Caco-2 (cell line): ENCODE measurements at regions of chr12 and their contacts with region 1.

Region 1: GRCh38 chr12:57124259-57124877 is 3.9 kb upstream of the LRP1 start:
- DNase-seq: peak; percentile 75 to 82
- H3K4me3 ChIP-seq: no peak overlapping the region
- H3K4me3 Mint-ChIP-seq: no peak overlapping the region
- H3K27ac Mint-ChIP-seq: no peak overlapping the region
- H3K4me1 ChIP-seq: peaks cover 8% of the 10 kb centered on the region
- H3K4me1 Mint-ChIP-seq: peaks cover 8% of the 10 kb centered on the region
- H3K27me3 ChIP-seq: no peaks in the 10 kb centered on the region
- H3K27me3 Mint-ChIP-seq: no peaks in the 10 kb centered on the region
- CTCF ChIP-seq: peak; percentile 86 to 88

Region 2: DNA sequence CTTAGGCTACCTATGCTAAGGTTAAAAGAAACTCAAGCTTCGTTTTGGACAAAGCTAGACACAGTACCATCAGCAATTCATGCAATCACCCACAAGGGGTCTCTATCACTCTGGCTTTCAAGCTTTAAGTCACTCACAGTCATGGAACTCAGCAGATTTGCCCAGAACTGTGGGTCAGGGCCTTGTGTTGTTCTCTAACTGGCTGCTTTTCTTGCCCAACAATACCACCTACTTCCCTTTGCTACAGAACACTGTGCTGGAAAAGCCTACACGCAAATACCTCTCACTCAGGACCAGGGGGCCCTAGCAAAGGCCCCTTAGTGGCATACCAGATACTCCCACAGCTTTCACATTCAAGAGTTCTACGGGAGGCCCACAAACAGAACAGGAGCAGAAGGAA is 54.8 kb before region 1 on chr12:
- CTCF ChIA-PET with region 1: interaction called, 13 read pairs
- POLR2A ChIA-PET with region 1: no interaction called
- intact Hi-C with region 1: no loop called
- DNase-seq: peak; percentile 66
- H3K4me3 ChIP-seq: no peak overlapping the region
- H3K4me3 Mint-ChIP-seq: no peak overlapping the region
- H3K27ac Mint-ChIP-seq: peak overlapping the region; percentile 5
- H3K4me1 ChIP-seq: no peaks in the 10 kb centered on the region
- H3K4me1 Mint-ChIP-seq: no peaks in the 10 kb centered on the region
- H3K27me3 ChIP-seq: no peaks in the 10 kb centered on the region
- H3K27me3 Mint-ChIP-seq: no peaks in the 10 kb centered on the region
- CTCF ChIP-seq: peak; percentile 81 to 86

Region 3: GRCh38 chr12:57088459-57089248 is 35.7 kb before region 1 on chr12 and contains the start of gene NAB2:
- CTCF ChIA-PET with region 1: interaction called, 13 read pairs
- POLR2A ChIA-PET with region 1: interaction called, 7 read pairs
- intact Hi-C with region 1: no loop called
- DNase-seq: peak; percentile 94 to 95
- H3K4me3 ChIP-seq: peak within 1 kb of the TSS; percentile 97
- H3K4me3 Mint-ChIP-seq: peak within 1 kb of the TSS; percentile 78
- H3K27ac Mint-ChIP-seq: peak within 1 kb of the TSS; percentile 98
- H3K4me1 ChIP-seq: peaks cover 24% of the 10 kb centered on the region
- H3K4me1 Mint-ChIP-seq: peaks cover 35% of the 10 kb centered on the region
- H3K27me3 ChIP-seq: no peaks in the 10 kb centered on the region
- H3K27me3 Mint-ChIP-seq: no peaks in the 10 kb centered on the region
- CTCF ChIP-seq: no peak
- total RNA-seq, gene NAB2: 15.7 and 16.4 TPM in 2 replicates

Region 4: DNA sequence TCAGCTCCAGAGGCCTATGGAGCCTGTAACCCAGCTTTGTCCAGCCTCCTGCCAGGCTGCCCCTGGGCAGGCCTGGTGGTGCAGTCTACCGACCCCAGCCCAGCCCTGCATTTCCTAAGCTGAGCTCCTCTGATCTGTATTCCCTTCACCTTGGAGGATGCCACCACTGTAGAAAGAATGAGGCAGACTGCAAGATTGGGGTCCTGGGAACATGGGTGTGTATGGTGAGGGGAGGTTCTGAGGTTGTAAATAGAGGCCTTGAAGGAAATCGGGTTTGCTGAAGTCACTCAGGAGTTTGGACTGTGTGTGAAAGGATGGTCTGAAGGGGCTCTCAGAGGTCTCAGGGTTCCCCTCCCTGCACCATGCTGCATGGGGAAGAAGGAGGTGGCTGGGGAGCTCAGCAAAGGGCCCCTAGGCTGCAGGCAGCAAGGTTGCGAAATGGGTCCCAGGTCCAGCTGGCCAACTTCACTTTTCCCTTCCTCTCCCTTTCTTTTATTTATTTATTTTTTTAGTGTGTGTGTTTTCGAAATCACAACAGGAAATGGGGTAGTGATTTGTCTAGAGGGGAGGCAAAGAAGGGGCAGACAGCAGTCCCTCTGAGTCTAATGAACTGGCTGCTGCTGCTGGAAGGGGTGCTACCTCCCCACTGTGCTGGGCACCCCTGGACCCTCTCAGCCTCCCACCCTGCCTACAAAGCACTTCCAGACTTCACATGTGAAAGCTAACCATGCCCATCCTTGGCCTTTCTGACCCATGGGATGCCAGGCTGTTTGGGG is 24.3 kb after region 1 on chr12:
- CTCF ChIA-PET with region 1: interaction called, 35 read pairs
- POLR2A ChIA-PET with region 1: interaction called, 39 read pairs
- intact Hi-C with region 1: loop called (anchors 1 kb)
- DNase-seq: peak; percentile 56 to 60
- H3K4me3 ChIP-seq: no peak overlapping the region
- H3K4me3 Mint-ChIP-seq: peak overlapping the region; percentile 17
- H3K27ac Mint-ChIP-seq: peak overlapping the region; percentile 97
- H3K4me1 ChIP-seq: peaks cover 44% of the 10 kb centered on the region
- H3K4me1 Mint-ChIP-seq: peaks cover 51% of the 10 kb centered on the region
- H3K27me3 ChIP-seq: no peaks in the 10 kb centered on the region
- H3K27me3 Mint-ChIP-seq: no peaks in the 10 kb centered on the region
- CTCF ChIP-seq: no peak

Region 5: DNA sequence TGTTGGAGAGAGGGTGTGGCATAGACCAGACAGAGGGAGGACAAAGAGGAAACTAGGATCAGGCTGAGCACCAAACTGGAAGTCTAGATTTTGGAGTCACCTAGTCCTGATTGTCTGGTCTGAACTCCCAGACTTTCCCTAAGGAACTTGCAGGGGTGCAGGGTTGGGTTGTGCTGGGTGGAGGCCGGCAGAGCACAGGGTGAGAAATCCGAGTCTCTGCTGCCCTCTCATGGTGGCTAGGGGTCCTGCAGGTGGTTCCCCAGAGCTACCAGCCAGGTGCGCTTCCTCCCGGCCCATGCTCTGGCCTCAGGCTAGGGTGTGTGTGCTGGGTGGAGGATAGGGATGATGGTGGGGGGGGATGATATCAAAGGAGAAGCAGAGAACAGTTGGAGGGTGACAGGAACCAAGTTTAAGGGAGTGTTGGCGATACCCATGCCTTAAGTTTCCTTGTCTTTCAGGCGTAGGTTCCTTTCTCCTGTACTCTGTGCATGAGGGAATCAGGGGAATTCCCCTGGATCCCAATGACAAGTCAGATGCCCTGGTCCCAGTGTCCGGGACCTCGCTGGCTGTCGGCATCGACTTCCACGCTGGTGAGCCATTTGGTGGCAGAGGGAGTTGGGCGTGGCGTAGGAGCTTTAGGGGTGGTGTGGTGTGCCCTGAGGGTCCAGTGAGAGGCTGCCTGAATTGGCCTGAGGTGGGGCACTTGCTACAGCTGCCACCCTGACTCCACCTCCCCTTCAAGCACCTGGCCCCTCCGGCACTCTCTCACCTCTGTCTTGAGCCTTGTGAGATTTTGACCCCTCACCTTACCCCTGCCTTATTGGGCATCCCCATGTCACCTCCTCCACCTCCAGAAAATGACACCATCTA is 58.8 kb after region 1 on chr12:
- CTCF ChIA-PET with region 1: interaction called, 49 read pairs
- POLR2A ChIA-PET with region 1: no interaction called
- intact Hi-C with region 1: loop called (anchors 1 kb)
- DNase-seq: peak; percentile 79 to 86
- H3K4me3 ChIP-seq: no peak overlapping the region
- H3K4me3 Mint-ChIP-seq: no peak overlapping the region
- H3K27ac Mint-ChIP-seq: no peak overlapping the region
- H3K4me1 ChIP-seq: no peaks in the 10 kb centered on the region
- H3K4me1 Mint-ChIP-seq: peaks cover 17% of the 10 kb centered on the region
- H3K27me3 ChIP-seq: no peaks in the 10 kb centered on the region
- H3K27me3 Mint-ChIP-seq: no peaks in the 10 kb centered on the region
- CTCF ChIP-seq: peak; percentile 74 to 90

Region 6: DNA sequence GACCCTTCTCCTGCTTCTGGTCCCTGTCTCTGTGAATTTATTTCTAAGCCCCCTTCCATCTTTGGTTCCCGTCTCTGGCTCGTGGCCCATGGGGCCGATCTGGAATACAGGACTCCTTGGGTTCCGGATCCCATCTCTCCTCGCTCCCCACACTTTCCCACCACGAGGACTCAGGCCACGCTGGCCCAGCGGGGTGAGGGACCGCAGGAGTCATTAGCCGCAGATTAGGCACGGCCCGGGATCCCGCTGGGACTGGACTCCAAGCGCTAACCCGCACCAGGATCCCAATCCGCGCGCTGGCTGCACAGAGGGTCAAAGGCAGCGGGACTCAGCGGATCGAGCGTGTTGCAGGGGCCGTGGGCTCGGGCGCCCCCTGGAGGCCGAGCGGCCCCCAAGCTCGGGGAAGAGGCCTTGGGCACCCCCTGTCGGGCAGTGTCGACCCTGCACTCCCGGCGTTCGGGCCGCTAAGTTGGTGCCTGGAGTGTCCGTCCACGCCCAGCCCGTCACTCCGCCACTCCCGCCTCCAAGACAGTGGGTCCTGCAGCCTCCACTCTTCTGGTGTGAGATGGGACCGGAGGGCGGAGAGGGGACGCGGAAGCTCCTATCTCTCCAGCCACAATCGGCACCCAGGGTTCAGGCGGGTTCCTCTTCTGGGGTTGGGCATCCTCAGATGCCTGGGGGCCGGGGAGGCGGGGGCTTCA is 114.6 kb after region 1 on chr12:
- CTCF ChIA-PET with region 1: interaction called, 12 read pairs
- POLR2A ChIA-PET with region 1: interaction called, 3 read pairs
- intact Hi-C with region 1: no loop called
- DNase-seq: peak; percentile 78 to 92
- H3K4me3 ChIP-seq: peak overlapping the region; percentile 43
- H3K4me3 Mint-ChIP-seq: peak overlapping the region; percentile 79
- H3K27ac Mint-ChIP-seq: peak overlapping the region; percentile 83
- H3K4me1 ChIP-seq: peaks cover 19% of the 10 kb centered on the region
- H3K4me1 Mint-ChIP-seq: peaks cover 43% of the 10 kb centered on the region
- H3K27me3 ChIP-seq: peaks cover 7% of the 10 kb centered on the region
- H3K27me3 Mint-ChIP-seq: peaks cover 7% of the 10 kb centered on the region
- CTCF ChIP-seq: peak; percentile 100

Region 7: GRCh38 chr12:57389033-57389432 is 264.7 kb after region 1 on chr12:
- CTCF ChIA-PET with region 1: no interaction called
- POLR2A ChIA-PET with region 1: no interaction called
- intact Hi-C with region 1: no loop called
- DNase-seq: no peak
- H3K4me3 ChIP-seq: no peak overlapping the region
- H3K4me3 Mint-ChIP-seq: no peak overlapping the region
- H3K27ac Mint-ChIP-seq: no peak overlapping the region
- H3K4me1 ChIP-seq: no peaks in the 10 kb centered on the region
- H3K4me1 Mint-ChIP-seq: peaks cover 7% of the 10 kb centered on the region
- H3K27me3 ChIP-seq: no peaks in the 10 kb centered on the region
- H3K27me3 Mint-ChIP-seq: no peaks in the 10 kb centered on the region
- CTCF ChIP-seq: no peak